PC-9 (cell line): ENCODE measurements at regions of chr2 and their contacts with region 1.

Region 1: GRCh38 chr2:128305159-128306087 is 13.2 kb downstream of the HS6ST1 start:
- DNase-seq: peak; percentile 95 to 96
- H3K4me3 ChIP-seq: no peak overlapping the region
- H3K27ac ChIP-seq: peak overlapping the region; percentile 56
- H3K4me1 ChIP-seq: peaks cover 63% of the 10 kb centered on the region
- H3K27me3 ChIP-seq: no peaks in the 10 kb centered on the region
- CTCF ChIP-seq: no peak; the same call in 1 of the 2 replicates

Region 2: GRCh38 chr2:127526149-127527000 is 779.0 kb before region 1 on chr2 and contains the start of gene IWS1:
- CTCF ChIA-PET with region 1: no interaction called
- POLR2A ChIA-PET with region 1: no interaction called
- intact Hi-C with region 1: loop called (anchors 10 kb)
- DNase-seq: peak; percentile 95
- H3K4me3 ChIP-seq: peak within 1 kb of the TSS; percentile 88
- H3K27ac ChIP-seq: peak within 1 kb of the TSS; percentile 97
- H3K4me1 ChIP-seq: peaks cover 43% of the 10 kb centered on the region
- H3K27me3 ChIP-seq: no peaks in the 10 kb centered on the region
- CTCF ChIP-seq: no peak; the same call in 1 of the 2 replicates
- total RNA-seq, gene IWS1: 47.3 and 51.3 TPM in 2 replicates

Region 3: GRCh38 chr2:128062571-128062970 is 242.9 kb before region 1 on chr2:
- CTCF ChIA-PET with region 1: no interaction called
- POLR2A ChIA-PET with region 1: no interaction called
- intact Hi-C with region 1: loop called (anchors 1 kb)
- DNase-seq: no peak
- H3K4me3 ChIP-seq: no peak overlapping the region
- H3K27ac ChIP-seq: no peak overlapping the region
- H3K4me1 ChIP-seq: no peaks in the 10 kb centered on the region
- H3K27me3 ChIP-seq: no peaks in the 10 kb centered on the region
- CTCF ChIP-seq: no peak

Region 4: GRCh38 chr2:128232965-128233789 is 72.2 kb before region 1 on chr2:
- CTCF ChIA-PET with region 1: no interaction called
- POLR2A ChIA-PET with region 1: interaction called, 3 read pairs
- intact Hi-C with region 1: loop called (anchors 1 kb)
- DNase-seq: peak; percentile 58 to 89
- H3K4me3 ChIP-seq: peak overlapping the region; percentile 75
- H3K27ac ChIP-seq: no peak overlapping the region
- H3K4me1 ChIP-seq: no peaks in the 10 kb centered on the region
- H3K27me3 ChIP-seq: no peaks in the 10 kb centered on the region
- CTCF ChIP-seq: peak; percentile 95

Region 5: DNA sequence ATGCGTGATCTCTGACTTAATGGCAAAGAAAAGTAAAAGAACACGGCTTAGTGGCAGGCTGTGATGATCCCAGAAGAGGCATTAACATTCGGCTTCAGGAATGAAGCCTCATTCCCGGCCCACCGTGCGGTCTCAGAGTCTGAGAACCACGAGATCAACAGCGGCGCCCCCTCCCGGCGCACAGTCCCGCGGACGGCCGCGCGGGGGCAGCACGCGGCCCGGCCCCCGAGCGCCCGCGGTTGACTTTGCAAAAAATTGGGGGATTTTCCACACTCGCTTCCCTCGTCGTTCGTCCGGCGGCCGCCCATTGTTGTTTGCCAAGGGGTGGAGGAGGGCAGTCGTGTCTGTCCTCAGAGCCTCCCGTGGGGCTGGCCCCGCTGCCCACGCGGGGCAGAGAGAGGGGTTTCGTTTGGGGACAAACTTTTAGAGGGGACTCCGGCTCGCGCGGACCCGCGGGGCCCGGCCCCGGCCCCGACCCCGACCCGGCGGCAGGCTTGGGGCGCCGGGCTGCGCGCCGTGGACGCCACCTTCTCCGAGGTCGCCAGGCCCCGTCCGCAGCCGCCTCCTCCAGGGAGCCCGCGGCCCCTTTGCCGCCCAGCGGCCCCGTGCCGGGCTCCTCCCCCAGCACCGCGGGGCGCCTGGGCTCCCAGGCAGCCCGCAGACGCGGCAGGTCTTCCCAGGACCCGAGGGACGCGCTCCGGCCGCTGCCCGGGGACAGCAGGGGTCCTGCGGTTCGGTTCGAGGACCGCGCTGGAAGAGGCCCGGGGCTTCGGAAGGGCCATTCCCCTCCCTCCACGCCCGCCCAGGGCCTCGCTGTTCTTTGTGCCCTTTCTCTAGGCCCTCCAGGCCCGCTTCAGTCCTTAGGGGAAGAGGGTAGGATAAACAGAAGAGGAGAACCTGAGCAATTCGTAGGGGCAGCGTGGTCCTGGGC is 16.6 kb after region 1 on chr2:
- CTCF ChIA-PET with region 1: interaction called, 3 read pairs
- POLR2A ChIA-PET with region 1: no interaction called
- intact Hi-C with region 1: loop called (anchors 1 kb)
- DNase-seq: peak; percentile 66 to 85
- H3K4me3 ChIP-seq: peak overlapping the region; percentile 90
- H3K27ac ChIP-seq: peak overlapping the region; percentile 52; the same call in 1 of the 2 replicates
- H3K4me1 ChIP-seq: peaks cover 3% of the 10 kb centered on the region
- H3K27me3 ChIP-seq: no peaks in the 10 kb centered on the region
- CTCF ChIP-seq: peak; percentile 85

Region 6: GRCh38 chr2:128342550-128342949 is 37.1 kb after region 1 on chr2:
- CTCF ChIA-PET with region 1: no interaction called
- POLR2A ChIA-PET with region 1: no interaction called
- intact Hi-C with region 1: no loop called
- DNase-seq: no peak
- H3K4me3 ChIP-seq: no peak overlapping the region
- H3K27ac ChIP-seq: no peak overlapping the region
- H3K4me1 ChIP-seq: no peaks in the 10 kb centered on the region
- H3K27me3 ChIP-seq: no peaks in the 10 kb centered on the region
- CTCF ChIP-seq: no peak